ENCODE measurements at regions of chr12 and their contacts with region 1.

Region 1: DNA sequence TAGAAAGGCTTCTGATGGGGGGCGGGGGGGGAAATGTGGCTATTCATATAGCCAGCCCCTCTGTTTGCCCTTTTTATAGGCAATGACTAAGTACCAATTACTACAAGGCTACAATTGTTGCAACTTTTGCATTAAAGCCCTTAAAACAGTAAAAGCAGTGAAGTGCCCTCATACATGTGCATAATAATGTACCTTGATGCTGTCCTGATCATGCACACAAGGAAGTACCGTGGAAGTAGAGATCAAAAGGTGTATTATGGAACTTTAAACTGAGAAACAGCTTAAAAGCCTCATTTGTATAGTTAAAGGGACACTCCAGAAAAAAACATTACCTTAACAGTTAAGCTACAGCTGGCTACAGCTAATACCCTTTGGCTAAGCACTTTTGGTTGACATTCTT is 111.8 kb downstream of the PLEKHG7 start:
- DNase-seq: no peak
- ATAC-seq: no peak
- H3K4me3 ChIP-seq: no peak overlapping the region
- H3K27ac ChIP-seq: no peak overlapping the region
- H3K4me1 ChIP-seq: no peaks in the 10 kb centered on the region
- H3K27me3 ChIP-seq: no peaks in the 10 kb centered on the region
- CTCF ChIP-seq: no peak
- POLR2A ChIP-seq: no peak
- RAD21 ChIP-seq: no peak

Region 2: GRCh38 chr12:91866566-91866965 is 948.0 kb before region 1 on chr12:
- CTCF ChIA-PET with region 1: no interaction called
- POLR2A ChIA-PET with region 1: no interaction called
- dilution Hi-C with region 1: no loop called
- in situ Hi-C with region 1: no loop called
- intact Hi-C with region 1: no loop called
- DNase-seq: no peak
- ATAC-seq: no peak
- H3K4me3 ChIP-seq: no peak overlapping the region
- H3K27ac ChIP-seq: no peak overlapping the region
- H3K4me1 ChIP-seq: peaks cover 2% of the 10 kb centered on the region; the same call in 1 of the 2 replicates
- H3K27me3 ChIP-seq: no peaks in the 10 kb centered on the region
- CTCF ChIP-seq: no peak
- POLR2A ChIP-seq: no peak
- RAD21 ChIP-seq: no peak

Region 3: GRCh38 chr12:92871116-92871515 is 56.5 kb after region 1 on chr12:
- CTCF ChIA-PET with region 1: no interaction called
- POLR2A ChIA-PET with region 1: interaction called, 13 read pairs
- dilution Hi-C with region 1: no loop called
- in situ Hi-C with region 1: no loop called
- intact Hi-C with region 1: no loop called
- DNase-seq: no peak
- ATAC-seq: no peak
- H3K4me3 ChIP-seq: no peak overlapping the region
- H3K27ac ChIP-seq: no peak overlapping the region
- H3K4me1 ChIP-seq: no peaks in the 10 kb centered on the region
- H3K27me3 ChIP-seq: no peaks in the 10 kb centered on the region
- CTCF ChIP-seq: no peak
- POLR2A ChIP-seq: no peak
- RAD21 ChIP-seq: no peak

Measured in IMR-90 (cell line).